Activated B cell treated with CpG ODN at 0.5 μM for 24 hours (primary cell): ENCODE measurements at regions of chr12 and their contacts with region 1.

Region 1: DNA sequence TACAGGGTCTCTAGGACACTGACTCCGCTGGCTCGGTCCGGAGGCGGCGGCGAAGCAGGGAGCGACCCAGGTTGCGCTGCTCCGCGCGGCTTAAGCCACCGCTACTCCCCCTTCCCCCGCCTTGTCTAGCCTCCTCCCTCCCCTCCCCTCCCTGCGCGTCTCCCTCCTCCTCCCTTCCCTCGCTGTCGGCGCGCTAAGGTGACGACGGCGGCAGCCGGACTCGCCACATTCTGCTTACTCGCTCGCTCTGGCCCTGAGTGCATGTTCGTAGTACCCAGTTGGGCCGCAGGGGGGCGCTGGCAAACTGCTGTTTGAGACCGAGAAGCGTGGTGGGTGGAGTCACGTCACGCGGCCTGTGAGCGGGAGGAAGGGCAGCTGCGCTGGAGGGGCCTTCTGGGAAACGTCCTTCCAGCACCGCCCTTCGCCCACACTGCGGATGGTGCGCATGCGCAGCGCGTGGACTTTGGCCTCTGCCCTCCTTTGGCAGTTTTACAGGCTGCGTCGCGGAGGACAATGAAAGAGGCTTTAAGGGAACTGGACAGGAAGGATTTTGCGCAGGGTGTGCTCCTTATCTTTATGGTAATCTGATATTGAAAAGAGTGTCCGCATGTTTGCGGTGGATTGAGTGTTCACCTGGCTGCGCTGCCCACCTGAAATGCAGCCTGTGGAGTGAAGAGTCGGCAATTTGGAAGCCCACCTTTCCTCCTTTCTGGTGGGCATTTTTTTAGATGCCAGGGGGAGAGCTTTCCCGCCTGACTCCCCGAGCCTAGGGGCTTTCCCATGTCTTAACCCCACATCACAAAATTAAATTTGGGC is at the start of gene SCAF11:
- DNase-seq: peak; percentile 100
- ATAC-seq: peak; percentile 83
- H3K4me3 Mint-ChIP-seq: peak within 1 kb of the TSS; percentile 96
- H3K27ac Mint-ChIP-seq: peak within 1 kb of the TSS; percentile 98
- H3K4me1 Mint-ChIP-seq: peaks cover 47% of the 10 kb centered on the region
- H3K27me3 Mint-ChIP-seq: no peaks in the 10 kb centered on the region
- CTCF ChIP-seq: no peak
- total RNA-seq, gene SCAF11: 180 and 198 TPM in 2 replicates

Region 2: GRCh38 chr12:45148006-45148405 is 842.7 kb before region 1 on chr12:
- CTCF ChIA-PET with region 1: no interaction called
- POLR2A ChIA-PET with region 1: no interaction called
- intact Hi-C with region 1: no loop called
- DNase-seq: no peak
- ATAC-seq: no peak
- H3K4me3 Mint-ChIP-seq: no peak overlapping the region
- H3K27ac Mint-ChIP-seq: no peak overlapping the region
- H3K4me1 Mint-ChIP-seq: no peaks in the 10 kb centered on the region
- H3K27me3 Mint-ChIP-seq: peaks cover 12% of the 10 kb centered on the region
- CTCF ChIP-seq: no peak

Region 3: DNA sequence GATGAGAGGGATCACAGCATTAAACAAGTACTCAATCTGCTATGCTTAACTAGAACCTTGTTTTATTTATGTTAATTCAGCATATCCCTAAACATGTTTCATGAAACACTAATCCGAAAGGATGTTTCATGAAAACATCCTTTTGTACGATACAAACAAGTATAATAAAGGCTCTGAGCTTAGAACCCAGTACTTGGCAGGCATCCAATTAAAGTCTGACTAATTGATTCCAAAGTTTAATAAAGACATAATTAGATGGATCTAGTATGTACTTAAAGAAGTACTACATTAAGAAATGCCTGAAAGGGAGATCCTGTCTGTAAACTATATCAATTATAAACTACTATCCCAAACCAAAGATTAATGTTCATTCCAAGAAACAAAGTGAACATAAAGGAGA is 52.1 kb before region 1 on chr12:
- CTCF ChIA-PET with region 1: no interaction called
- POLR2A ChIA-PET with region 1: no interaction called
- intact Hi-C with region 1: no loop called
- DNase-seq: no peak
- ATAC-seq: no peak
- H3K4me3 Mint-ChIP-seq: no peak overlapping the region
- H3K27ac Mint-ChIP-seq: no peak overlapping the region
- H3K4me1 Mint-ChIP-seq: peaks cover 2% of the 10 kb centered on the region
- H3K27me3 Mint-ChIP-seq: no peaks in the 10 kb centered on the region
- CTCF ChIP-seq: no peak

Region 4: GRCh38 chr12:45973526-45973925 is 17.1 kb before region 1 on chr12:
- CTCF ChIA-PET with region 1: no interaction called
- POLR2A ChIA-PET with region 1: interaction called, 5 read pairs
- intact Hi-C with region 1: loop called (anchors 2 kb)
- DNase-seq: no peak
- ATAC-seq: peak; percentile 25
- H3K4me3 Mint-ChIP-seq: peak overlapping the region; percentile 39
- H3K27ac Mint-ChIP-seq: peak overlapping the region; percentile 75
- H3K4me1 Mint-ChIP-seq: peaks cover 81% of the 10 kb centered on the region
- H3K27me3 Mint-ChIP-seq: no peaks in the 10 kb centered on the region
- CTCF ChIP-seq: no peak

Region 5: GRCh38 chr12:46024099-46024498 is 33.4 kb after region 1 on chr12:
- CTCF ChIA-PET with region 1: no interaction called
- POLR2A ChIA-PET with region 1: no interaction called
- intact Hi-C with region 1: no loop called
- DNase-seq: no peak
- ATAC-seq: no peak
- H3K4me3 Mint-ChIP-seq: no peak overlapping the region
- H3K27ac Mint-ChIP-seq: no peak overlapping the region
- H3K4me1 Mint-ChIP-seq: no peaks in the 10 kb centered on the region
- H3K27me3 Mint-ChIP-seq: peaks cover 24% of the 10 kb centered on the region
- CTCF ChIP-seq: no peak

Region 6: DNA sequence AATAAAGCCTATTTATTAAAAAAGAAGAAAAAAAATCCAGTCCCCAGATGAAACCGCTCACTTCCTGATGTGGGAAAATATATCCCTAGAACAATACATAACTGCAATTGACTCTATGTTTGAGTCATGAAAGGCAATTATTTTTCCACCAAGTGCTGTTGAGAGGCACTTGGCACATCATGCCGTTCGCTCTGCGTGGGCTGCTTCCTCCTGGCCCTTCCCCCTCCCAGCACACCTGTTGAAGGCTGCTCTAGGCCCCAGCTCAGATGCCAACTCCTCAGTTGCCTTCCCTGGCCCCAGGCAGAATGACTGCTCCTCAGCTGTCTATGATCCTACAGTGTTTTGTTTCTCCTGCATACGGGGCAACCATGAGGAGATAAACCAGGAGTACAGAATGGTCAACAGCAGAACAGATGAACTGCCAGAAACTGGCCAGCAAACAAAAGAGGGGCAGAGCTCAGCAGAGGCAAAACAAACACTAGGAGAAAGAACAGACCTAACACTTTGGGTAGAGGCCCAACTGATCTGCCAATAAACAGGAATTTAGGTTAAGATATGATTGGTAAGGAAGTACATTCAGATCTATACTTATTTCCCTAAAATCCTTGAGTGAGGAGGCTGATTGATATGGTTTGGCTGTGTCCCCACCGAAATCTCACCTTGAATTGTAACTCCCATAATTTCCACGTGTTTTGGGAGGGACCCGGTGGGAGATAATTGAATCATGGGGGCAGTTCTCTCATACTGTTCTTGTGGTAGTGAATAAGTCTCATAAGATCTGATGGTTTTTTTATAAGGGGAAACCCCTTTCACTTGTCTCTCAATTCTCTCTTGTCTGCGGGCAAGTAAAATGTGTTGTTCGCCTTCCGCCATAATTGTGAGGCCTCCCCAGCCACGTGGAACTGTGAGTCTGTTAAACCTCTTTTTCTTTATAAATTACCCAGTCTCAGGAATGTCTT is 219.5 kb after region 1 on chr12:
- CTCF ChIA-PET with region 1: no interaction called
- POLR2A ChIA-PET with region 1: interaction called, 6 read pairs
- intact Hi-C with region 1: loop called (anchors 1 kb)
- DNase-seq: peak; percentile 47
- ATAC-seq: peak; percentile 70
- H3K4me3 Mint-ChIP-seq: peak overlapping the region; percentile 63
- H3K27ac Mint-ChIP-seq: peak overlapping the region; percentile 93
- H3K4me1 Mint-ChIP-seq: peaks cover 94% of the 10 kb centered on the region
- H3K27me3 Mint-ChIP-seq: no peaks in the 10 kb centered on the region
- CTCF ChIP-seq: no peak

Region 7: GRCh38 chr12:46382964-46383653 is 392.4 kb after region 1 on chr12:
- CTCF ChIA-PET with region 1: no interaction called
- POLR2A ChIA-PET with region 1: interaction called, 9 read pairs
- intact Hi-C with region 1: loop called (anchors 1 kb)
- DNase-seq: peak; percentile 92
- ATAC-seq: peak; percentile 69
- H3K4me3 Mint-ChIP-seq: peak overlapping the region; percentile 91
- H3K27ac Mint-ChIP-seq: peak overlapping the region; percentile 94
- H3K4me1 Mint-ChIP-seq: peaks cover 46% of the 10 kb centered on the region
- H3K27me3 Mint-ChIP-seq: no peaks in the 10 kb centered on the region
- CTCF ChIP-seq: no peak

Region 8: DNA sequence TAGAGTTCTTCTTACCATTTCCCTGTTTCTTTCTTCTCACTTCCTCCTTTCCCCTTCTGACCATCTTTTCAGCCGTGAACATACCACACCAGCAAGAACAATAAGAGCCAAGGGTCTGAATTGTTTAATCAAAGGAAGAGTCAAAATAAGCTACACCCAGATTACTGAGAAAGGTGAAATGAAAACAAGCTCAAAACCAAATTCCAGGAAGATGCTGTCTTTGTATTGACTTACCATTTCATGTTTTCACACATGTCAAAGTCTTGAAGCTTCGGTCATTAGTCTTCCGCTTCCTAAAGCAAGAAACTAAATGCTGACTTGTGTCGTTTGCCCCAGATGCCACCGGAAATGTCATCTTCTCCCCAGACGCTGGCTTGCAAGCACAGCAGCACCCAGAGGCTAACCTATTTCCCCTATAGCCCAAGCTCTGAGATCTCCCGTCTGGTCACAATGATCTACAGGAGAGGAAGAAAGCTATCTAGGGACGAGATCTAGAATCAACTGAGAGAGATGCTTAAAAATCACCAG is 1225.5 kb after region 1 on chr12:
- CTCF ChIA-PET with region 1: no interaction called
- POLR2A ChIA-PET with region 1: interaction called, 7 read pairs
- intact Hi-C with region 1: loop called (anchors 5 kb)
- DNase-seq: peak; percentile 42
- ATAC-seq: peak; percentile 80
- H3K4me3 Mint-ChIP-seq: peak overlapping the region; percentile 88
- H3K27ac Mint-ChIP-seq: peak overlapping the region; percentile 96
- H3K4me1 Mint-ChIP-seq: peaks cover 77% of the 10 kb centered on the region
- H3K27me3 Mint-ChIP-seq: no peaks in the 10 kb centered on the region
- CTCF ChIP-seq: no peak

Region 9: DNA sequence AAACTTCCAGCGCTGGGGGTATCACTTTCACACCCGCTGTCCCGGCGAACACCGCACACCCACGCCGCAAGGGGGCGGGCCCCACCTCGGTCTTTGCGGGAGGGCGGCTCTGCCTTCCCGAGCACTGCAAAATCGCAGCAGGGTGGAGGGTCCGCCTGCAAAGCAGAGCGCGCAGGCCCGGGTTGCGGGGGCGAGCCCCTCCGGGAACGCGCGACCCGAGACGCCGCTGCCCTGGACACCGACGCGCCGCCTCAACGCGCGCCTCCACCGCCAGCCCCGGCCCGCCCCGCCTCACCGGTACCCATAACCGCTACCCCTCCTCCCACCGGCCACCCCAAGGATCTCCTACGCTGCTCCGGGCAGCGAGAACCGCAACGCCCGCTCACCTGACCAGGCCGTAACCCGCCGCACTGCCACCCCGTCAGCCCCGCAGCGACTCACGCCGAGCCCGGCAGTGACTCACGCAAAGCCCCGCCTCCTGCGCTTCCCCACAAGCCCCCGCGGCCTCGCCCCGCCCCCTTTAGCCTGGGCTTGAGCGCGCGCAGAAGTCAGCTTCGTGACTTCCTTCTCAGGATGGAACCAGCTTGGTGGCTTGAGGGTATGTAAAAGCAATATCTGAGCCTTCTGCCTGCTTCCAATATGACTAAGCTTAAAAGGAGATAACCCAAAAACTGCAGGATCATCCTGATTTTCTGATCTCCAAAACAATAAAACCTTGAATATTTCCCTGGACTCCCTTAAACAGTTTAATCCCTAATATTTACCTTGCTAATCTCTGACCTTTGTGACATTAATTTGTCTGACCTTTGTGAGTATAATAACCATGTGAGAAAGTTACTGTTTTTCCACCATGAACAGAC is 1715.1 kb after region 1 on chr12 and contains the start of gene RPAP3:
- CTCF ChIA-PET with region 1: no interaction called
- POLR2A ChIA-PET with region 1: interaction called, 5 read pairs
- intact Hi-C with region 1: loop called (anchors 10 kb)
- DNase-seq: peak; percentile 96
- ATAC-seq: peak; percentile 90
- H3K4me3 Mint-ChIP-seq: peak within 1 kb of the TSS; percentile 97
- H3K27ac Mint-ChIP-seq: peak within 1 kb of the TSS; percentile 98
- H3K4me1 Mint-ChIP-seq: peaks cover 76% of the 10 kb centered on the region
- H3K27me3 Mint-ChIP-seq: no peaks in the 10 kb centered on the region
- CTCF ChIP-seq: no peak
- total RNA-seq, gene RPAP3: 58.4 and 60.5 TPM in 2 replicates